ENCODE measurements at regions of chr11 and their contacts with region 1.

Region 1: DNA sequence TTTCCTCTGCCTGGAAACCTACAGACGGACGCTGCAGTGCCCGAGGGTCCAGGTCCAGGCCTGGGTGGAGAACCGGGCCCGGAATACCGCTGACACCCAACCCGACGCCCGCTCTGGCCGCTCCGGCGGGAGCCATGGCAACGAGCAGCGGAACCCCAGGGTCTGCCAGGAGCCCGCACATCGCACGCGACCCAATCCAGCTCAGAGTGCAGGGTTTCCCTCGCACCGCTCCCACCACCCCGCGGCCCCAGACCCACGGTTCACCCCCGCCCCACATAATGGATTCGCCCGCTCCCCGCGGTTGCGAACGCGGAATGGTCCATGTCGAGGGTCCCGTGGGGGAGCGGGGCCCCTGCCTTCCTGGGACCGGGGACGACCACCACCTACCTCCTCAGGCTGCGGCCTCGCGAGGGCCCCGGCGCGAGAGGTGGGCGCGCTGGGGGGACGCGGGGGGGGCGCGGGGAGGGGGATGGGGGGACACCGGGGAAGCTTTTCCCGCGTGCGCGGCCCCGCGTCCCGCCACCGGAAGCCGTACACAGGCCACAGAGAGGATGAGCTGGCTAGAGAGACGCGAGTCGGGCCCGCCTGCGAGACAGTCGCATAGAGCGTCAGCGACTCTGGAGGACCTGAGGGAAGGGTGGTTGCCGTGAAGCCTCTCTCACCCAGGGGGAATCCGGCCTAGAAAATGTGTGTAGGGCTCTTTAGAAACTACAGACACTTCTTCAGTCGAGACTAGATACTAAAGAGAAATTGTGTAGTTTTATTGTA is at the start of gene SSRP1:
- DNase-seq: peak; percentile 95
- H3K4me3 Mint-ChIP-seq: peak within 1 kb of the TSS; percentile 93
- H3K27ac Mint-ChIP-seq: peak within 1 kb of the TSS; percentile 99
- H3K4me1 Mint-ChIP-seq: peaks cover 35% of the 10 kb centered on the region
- H3K27me3 Mint-ChIP-seq: no peaks in the 10 kb centered on the region
- total RNA-seq, gene SSRP1: 253 and 256 TPM in 2 replicates

Region 2: GRCh38 chr11:57311109-57311936 is 24.2 kb before region 1 on chr11:
- intact Hi-C with region 1: loop called (anchors 1 kb)
- DNase-seq: peak; percentile 90
- H3K4me3 Mint-ChIP-seq: peak overlapping the region; percentile 68
- H3K27ac Mint-ChIP-seq: no peak overlapping the region
- H3K4me1 Mint-ChIP-seq: peaks cover 14% of the 10 kb centered on the region
- H3K27me3 Mint-ChIP-seq: no peaks in the 10 kb centered on the region

Region 3: DNA sequence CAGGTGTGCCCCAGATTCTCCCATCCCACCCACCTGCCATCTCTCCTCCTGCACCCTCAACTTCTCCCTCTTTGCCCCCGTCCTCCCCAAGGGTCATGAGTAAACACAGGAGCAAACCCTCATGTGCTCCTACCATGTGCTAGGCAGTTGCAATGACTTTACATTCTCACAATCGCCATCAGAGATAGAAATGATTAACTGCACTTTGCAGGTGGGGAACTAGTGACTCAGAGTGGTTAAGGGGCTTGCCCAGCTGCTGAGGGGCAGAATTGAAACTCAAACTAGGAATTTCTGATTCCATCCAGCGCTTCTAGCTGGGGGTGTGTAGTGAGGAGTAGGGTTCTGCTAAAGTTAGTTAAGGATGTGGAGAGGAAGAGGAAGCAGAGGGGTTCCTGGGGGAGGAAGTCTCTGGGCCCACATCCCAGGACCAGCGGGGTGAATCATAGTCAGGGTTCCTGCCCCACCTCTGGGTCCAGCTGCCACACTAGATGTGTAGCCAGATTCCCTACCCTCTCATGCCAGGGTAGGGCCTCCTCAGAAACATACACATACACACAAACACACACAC is 70.9 kb after region 1 on chr11:
- intact Hi-C with region 1: loop called (anchors 5 kb)
- DNase-seq: no peak
- H3K4me3 Mint-ChIP-seq: peak overlapping the region; percentile 75
- H3K27ac Mint-ChIP-seq: peak overlapping the region; percentile 98
- H3K4me1 Mint-ChIP-seq: peaks cover 41% of the 10 kb centered on the region
- H3K27me3 Mint-ChIP-seq: no peaks in the 10 kb centered on the region

Region 4: GRCh38 chr11:57644748-57645688 is 309.5 kb after region 1 on chr11:
- intact Hi-C with region 1: loop called (anchors 5 kb)
- DNase-seq: peak; percentile 96
- H3K4me3 Mint-ChIP-seq: no peak overlapping the region
- H3K27ac Mint-ChIP-seq: no peak overlapping the region
- H3K4me1 Mint-ChIP-seq: peaks cover 48% of the 10 kb centered on the region
- H3K27me3 Mint-ChIP-seq: peaks cover 40% of the 10 kb centered on the region

Region 5: GRCh38 chr11:57741132-57742086 is 405.9 kb after region 1 on chr11 and contains the start of gene SELENOH:
- intact Hi-C with region 1: loop called (anchors 10 kb)
- DNase-seq: peak; percentile 98
- H3K4me3 Mint-ChIP-seq: peak within 1 kb of the TSS; percentile 93
- H3K27ac Mint-ChIP-seq: peak within 1 kb of the TSS; percentile 96
- H3K4me1 Mint-ChIP-seq: peaks cover 30% of the 10 kb centered on the region
- H3K27me3 Mint-ChIP-seq: no peaks in the 10 kb centered on the region
- total RNA-seq, gene SELENOH: 211 and 216 TPM in 2 replicates

Measured in activated CD4-positive, alpha-beta T cell treated with anti-CD3 and anti-CD28 coated beads, Interleukin-2, amount 10 ng/mL, durations not matched to agents 24 days and 14 days (primary cell).